ENCODE measurements at regions of chr6 and their contacts with region 1.

Region 1: DNA sequence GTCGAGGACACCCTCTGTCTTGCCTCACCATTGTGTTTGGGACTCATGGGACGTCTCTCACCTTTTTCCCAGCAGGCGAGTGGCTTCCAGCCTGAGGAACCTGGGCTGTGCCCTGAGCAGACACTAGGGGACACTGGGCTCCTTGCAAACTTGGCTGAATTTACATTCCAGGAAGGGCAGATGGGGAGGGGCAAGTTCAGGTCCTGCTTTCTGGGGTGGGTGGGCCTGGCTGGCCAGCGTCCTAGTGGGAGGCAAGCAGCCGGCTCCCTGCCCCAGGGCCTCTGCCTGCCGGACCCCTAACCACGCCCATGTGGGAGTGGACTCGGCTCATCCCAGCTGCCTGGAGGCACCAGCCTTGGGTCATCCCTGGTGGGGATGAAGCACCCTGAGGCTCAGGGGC is 48.2 kb upstream of the MLN start:
- DNase-seq: peak; percentile 78
- ATAC-seq: peak; percentile 88
- H3K4me3 Mint-ChIP-seq: no peak overlapping the region
- H3K27ac Mint-ChIP-seq: no peak overlapping the region
- H3K4me1 Mint-ChIP-seq: peaks cover 24% of the 10 kb centered on the region
- H3K27me3 Mint-ChIP-seq: peaks cover 3% of the 10 kb centered on the region; the same call in 1 of the 2 replicates
- CTCF ChIP-seq: 0 out of 2 replicates have a peak, but pooled peaks have one; percentile 20

Region 2: DNA sequence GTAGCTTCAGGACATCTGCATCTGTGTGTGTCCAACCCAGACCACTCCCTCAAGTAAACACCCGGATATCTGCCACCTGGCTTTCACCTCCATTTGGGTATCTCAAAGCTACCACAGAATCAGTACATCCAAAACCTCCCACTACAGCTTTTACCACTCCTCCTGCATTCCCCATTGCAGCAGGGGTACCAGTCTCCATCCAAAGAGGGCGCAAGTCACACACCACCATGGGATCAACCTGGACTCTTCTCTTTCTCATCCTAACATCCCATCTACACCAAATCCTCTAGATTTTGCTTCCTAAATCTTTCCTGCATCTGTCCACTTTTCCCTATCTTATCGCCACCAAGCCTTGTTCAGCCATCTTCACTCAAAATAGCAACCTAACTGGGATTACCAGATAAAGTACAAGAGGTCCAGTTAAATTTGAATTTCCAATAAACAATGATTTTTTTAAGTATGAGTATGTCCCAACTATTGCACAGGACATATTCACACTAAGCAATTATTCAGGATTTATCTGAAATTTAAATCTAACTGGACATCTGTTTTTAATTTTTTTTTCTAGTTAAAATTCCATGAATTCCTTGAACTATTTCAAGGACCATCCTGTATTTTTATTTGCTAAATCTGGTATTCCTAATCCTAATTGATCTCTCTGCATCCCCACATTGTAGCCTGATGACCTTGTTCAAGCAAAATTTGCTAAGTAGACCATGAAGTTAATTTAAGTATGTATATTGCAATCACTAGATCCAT is 116.2 kb after region 1 on chr6:
- CTCF ChIA-PET with region 1: interaction called, 10 read pairs
- POLR2A ChIA-PET with region 1: no interaction called
- DNase-seq: peak; percentile 62
- ATAC-seq: peak; percentile 99
- H3K4me3 Mint-ChIP-seq: no peak overlapping the region
- H3K27ac Mint-ChIP-seq: no peak overlapping the region
- H3K4me1 Mint-ChIP-seq: no peaks in the 10 kb centered on the region
- H3K27me3 Mint-ChIP-seq: peaks cover 38% of the 10 kb centered on the region
- CTCF ChIP-seq: no peak

Measured in WTC11 (cell line).